ENCODE measurements at regions of chr6 and their contacts with region 1.

Region 1: GRCh38 chr6:88919032-88919431 is 44.4 kb downstream of the RNGTT start:
- DNase-seq: no peak
- ATAC-seq: 0 out of 3 replicates have a peak, but pooled peaks have one; percentile 31
- H3K4me3 ChIP-seq: no peak overlapping the region
- H3K27ac ChIP-seq: no peak overlapping the region
- H3K4me1 ChIP-seq: no peaks in the 10 kb centered on the region
- H3K27me3 ChIP-seq: no peaks in the 10 kb centered on the region
- CTCF ChIP-seq: peak in 2 of 3 experiments; percentile 5 to 25; a peak in 3 of 6 replicates
- EP300 ChIP-seq: no peak
- POLR2A ChIP-seq: no peak
- RAD21 ChIP-seq: 0 out of 2 replicates have a peak, but pooled peaks have one; percentile 9

Region 2: DNA sequence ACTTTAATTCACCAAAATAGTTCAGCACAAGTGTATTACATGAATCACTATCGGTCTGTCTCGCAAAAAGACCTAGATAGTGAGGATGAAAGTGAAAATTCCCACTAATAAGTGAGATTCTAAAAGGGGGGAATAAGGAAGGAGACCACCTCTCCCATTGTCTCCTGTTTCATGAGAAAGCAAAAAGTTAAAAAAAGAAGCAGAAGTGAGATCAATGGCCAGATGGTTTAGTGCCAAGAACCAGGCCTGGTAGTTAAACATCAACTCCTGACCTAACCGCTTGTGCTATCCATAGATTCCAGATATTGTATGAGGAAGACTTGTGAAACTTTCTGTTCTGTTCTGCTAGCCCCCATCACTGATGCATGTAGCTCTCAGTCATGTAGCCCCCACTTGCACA is 248.7 kb before region 1 on chr6:
- CTCF ChIA-PET with region 1: no interaction called
- POLR2A ChIA-PET with region 1: no interaction called
- RAD21 ChIA-PET with region 1: no interaction called
- SMC1A ChIA-PET with region 1: no interaction called
- in situ Hi-C with region 1: no loop called
- intact Hi-C with region 1: no loop called
- DNase-seq: no peak
- ATAC-seq: no peak
- H3K4me3 ChIP-seq: no peak overlapping the region
- H3K27ac ChIP-seq: no peak overlapping the region
- H3K4me1 ChIP-seq: no peaks in the 10 kb centered on the region
- H3K27me3 ChIP-seq: no peaks in the 10 kb centered on the region
- CTCF ChIP-seq: no peak
- EP300 ChIP-seq: no peak
- POLR2A ChIP-seq: no peak
- RAD21 ChIP-seq: no peak

Region 3: GRCh38 chr6:88734544-88734943 is 184.5 kb before region 1 on chr6:
- CTCF ChIA-PET with region 1: no interaction called
- POLR2A ChIA-PET with region 1: no interaction called
- RAD21 ChIA-PET with region 1: no interaction called
- SMC1A ChIA-PET with region 1: no interaction called
- in situ Hi-C with region 1: no loop called
- intact Hi-C with region 1: no loop called
- DNase-seq: no peak
- ATAC-seq: no peak
- H3K4me3 ChIP-seq: no peak overlapping the region
- H3K27ac ChIP-seq: peak overlapping the region; percentile 3; the same call in 1 of the 2 replicates
- H3K4me1 ChIP-seq: no peaks in the 10 kb centered on the region; the same call in 1 of the 2 replicates
- H3K27me3 ChIP-seq: no peaks in the 10 kb centered on the region
- CTCF ChIP-seq: no peak
- EP300 ChIP-seq: no peak
- POLR2A ChIP-seq: no peak
- RAD21 ChIP-seq: no peak

Region 4: DNA sequence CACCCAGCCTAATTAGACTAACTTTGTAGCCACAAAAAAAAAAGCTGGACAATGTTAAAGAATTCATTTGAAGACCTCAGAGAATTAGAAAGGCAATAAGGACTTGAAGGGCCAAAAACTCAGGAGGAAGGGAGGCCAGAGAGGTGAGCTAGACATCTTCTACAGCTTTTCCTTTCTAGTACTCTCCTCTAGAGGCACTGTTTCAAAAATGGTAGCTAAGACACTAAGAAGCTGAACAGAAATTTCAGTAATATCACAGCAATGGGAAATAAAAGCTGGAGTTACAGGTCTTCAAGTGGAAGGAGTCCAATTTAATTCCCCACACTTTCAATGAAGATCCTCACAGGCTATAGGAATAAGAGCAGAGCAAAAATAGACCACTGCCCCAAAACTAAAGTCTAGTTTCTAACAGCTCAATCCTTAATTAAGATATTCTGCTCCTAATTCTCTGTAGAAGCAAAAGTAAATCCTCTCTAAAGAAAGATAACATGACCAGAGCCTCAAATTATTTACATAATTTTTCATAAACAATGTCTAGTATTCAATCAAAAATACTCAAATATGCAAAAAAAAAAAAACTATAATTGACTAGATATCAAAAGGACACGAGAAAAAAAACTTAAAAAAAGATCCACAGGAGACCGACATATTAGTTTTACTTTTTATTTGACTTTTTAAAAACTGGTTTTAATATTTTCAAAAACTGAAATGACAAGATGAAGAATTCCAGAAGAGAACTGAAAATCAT is 19.3 kb before region 1 on chr6:
- CTCF ChIA-PET with region 1: interaction called, 21 read pairs
- POLR2A ChIA-PET with region 1: no interaction called
- RAD21 ChIA-PET with region 1: interaction called, 5 read pairs
- SMC1A ChIA-PET with region 1: interaction called, 12 read pairs
- in situ Hi-C with region 1: no loop called
- intact Hi-C with region 1: no loop called
- DNase-seq: no peak
- ATAC-seq: peak; percentile 50; the same call in 2 of the 3 replicates
- H3K4me3 ChIP-seq: no peak overlapping the region
- H3K27ac ChIP-seq: no peak overlapping the region
- H3K4me1 ChIP-seq: no peaks in the 10 kb centered on the region
- H3K27me3 ChIP-seq: no peaks in the 10 kb centered on the region
- CTCF ChIP-seq: peak in 2 of 3 experiments; percentile 24 to 36; a peak in 2 of 6 replicates
- EP300 ChIP-seq: no peak
- POLR2A ChIP-seq: no peak
- RAD21 ChIP-seq: no peak

Region 5: GRCh38 chr6:88908598-88909548 is 10.2 kb before region 1 on chr6:
- CTCF ChIA-PET with region 1: interaction called, 10 read pairs
- POLR2A ChIA-PET with region 1: interaction called, 5 read pairs
- RAD21 ChIA-PET with region 1: interaction called, 5 read pairs
- SMC1A ChIA-PET with region 1: interaction called, 13 read pairs
- in situ Hi-C with region 1: no loop called
- intact Hi-C with region 1: no loop called
- DNase-seq: no peak
- ATAC-seq: no peak
- H3K4me3 ChIP-seq: no peak overlapping the region
- H3K27ac ChIP-seq: no peak overlapping the region
- H3K4me1 ChIP-seq: no peaks in the 10 kb centered on the region
- H3K27me3 ChIP-seq: no peaks in the 10 kb centered on the region
- CTCF ChIP-seq: no peak
- EP300 ChIP-seq: no peak
- POLR2A ChIP-seq: no peak
- RAD21 ChIP-seq: no peak

Region 6: DNA sequence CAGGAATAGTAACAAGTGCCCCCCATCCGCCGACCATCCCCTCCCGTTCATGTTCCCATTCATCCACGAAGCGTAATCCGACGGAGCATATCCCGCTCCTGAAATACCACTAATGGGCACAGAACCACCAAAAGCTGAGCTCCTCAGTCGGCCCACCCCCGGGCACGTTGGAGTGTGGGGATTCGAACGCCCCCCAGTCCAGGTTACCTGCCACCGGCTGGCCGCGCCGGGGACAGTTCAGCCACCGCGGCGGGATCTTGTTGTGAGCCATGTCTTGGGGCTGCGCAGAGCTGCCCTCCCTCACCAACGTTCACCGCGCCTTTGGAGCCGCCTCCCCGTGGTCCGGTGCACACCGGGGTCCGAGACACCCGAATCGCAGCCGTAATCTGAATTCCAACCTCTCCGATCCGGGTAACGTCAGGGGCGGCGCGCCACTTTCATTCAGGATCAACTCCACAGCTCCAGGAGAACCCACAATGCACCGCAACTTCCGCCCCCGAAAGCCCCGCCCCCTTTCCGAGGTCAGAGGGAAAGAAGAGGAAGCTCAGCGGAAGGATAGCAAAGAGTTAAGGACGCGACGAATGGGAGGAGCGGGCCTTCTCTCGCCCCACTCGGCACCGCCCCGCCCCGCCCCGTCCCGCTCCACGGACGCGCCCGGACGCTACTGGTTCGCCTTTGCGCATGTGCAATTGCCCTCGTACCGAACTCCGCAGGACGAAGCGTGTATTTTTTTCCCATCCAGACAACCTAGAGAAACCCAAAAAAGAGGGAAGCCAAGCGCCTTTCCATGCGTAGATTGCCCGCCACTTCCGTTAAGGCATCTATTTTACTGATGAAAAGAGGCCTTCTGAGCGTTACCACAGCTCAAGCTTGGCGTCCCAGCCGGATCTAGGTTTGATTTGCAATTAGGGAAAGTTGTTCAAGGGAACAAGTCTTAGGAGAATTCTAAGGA is 44.4 kb after region 1 on chr6 and contains the start of gene RNGTT:
- CTCF ChIA-PET with region 1: interaction called, 11 read pairs
- POLR2A ChIA-PET with region 1: no interaction called
- RAD21 ChIA-PET with region 1: no interaction called
- SMC1A ChIA-PET with region 1: interaction called, 5 read pairs
- in situ Hi-C with region 1: no loop called
- intact Hi-C with region 1: no loop called
- DNase-seq: peak; percentile 88
- ATAC-seq: peak; percentile 100
- H3K4me3 ChIP-seq: peak within 1 kb of the TSS; percentile 99
- H3K27ac ChIP-seq: peak within 1 kb of the TSS; percentile 80
- H3K4me1 ChIP-seq: no peaks in the 10 kb centered on the region
- H3K27me3 ChIP-seq: no peaks in the 10 kb centered on the region
- CTCF ChIP-seq: no peak
- EP300 ChIP-seq: no peak
- POLR2A ChIP-seq: peak; percentile 89
- RAD21 ChIP-seq: no peak
- polyA plus RNA-seq, gene RNGTT: 7.7 to 11.0 TPM

Measured in GM12878 (cell line).